Posterior cingulate gyrus (tissue), 11 donors: ENCODE measurements at regions of chr16 and their contacts with region 1.

Region 1: GRCh38 chr16:30115238-30115637 is 1.9 kb upstream of the GDPD3 start:
- DNase-seq: peak in 1 of 10 donors; percentile 43

Region 2: DNA sequence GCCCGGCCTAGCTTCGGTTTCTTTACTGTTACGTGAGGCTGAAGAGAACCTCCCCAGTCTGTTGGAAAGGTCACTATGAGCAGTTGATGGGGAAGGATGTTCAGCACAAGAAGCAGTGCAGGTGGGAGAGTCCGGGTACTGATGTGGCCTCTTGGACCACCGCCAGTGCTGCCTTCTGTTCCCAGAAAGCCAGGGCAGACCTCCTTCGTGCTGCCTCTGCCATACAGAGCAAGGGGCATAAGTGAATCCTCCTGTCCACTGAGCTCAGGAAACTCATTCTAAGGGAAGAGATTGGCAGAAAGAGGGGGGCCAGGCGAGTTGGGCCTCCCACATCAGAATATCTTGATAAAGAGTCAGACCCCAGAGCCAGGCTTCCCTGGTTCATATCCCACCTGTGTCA is 35.8 kb before region 1 on chr16:
- intact Hi-C with region 1: loop called (anchors 1 kb)
- DNase-seq: peak in 2 of 10 donors; percentile 46 to 67